ENCODE measurements at regions of chr11 and their contacts with region 1.

Region 1: DNA sequence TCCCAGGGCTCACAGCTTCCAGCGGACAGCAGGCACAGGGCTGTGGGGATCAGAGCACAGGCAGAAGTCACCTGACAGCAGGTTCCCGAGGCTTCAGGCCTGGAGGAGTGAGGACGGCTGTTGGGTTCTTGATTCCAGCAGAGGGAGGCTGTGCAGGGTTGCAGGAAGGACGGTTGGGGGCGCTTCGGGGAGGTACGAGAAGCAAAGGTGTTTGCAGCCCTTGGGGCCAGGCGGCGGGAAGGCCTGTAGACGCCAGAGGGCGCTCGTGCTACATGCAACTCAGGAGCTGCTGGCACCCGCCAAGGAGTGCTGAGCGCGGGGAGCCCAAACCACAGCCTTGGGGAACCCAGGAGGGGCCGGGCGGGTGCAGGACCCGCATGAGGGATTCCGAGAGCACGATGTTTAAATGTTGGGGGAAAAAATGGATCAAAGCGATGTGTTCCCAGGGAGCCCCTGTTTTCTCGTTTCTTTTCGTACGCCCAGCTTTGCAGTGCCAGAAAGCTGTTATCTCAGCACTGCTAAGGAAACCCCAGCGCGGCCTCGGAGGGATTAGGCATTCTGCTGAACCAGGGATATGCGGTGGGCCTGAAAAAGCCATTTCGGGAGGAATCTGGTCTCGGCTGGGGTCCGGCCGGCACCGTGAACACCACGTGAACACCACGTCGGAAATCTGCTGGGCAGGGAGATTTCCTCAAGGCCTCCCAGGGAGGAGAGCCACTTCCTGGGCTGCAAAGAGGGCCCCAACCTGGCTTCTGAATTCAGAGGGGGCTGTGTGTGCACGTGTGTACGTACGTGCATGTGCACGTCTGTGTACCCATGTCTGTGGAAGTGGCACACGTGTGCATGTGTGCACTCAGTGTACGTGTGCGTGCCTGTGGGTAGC is 88.1 kb downstream of the KCNQ1 start:
- DNase-seq: peak; percentile 88 to 95 (median 89)
- ATAC-seq: peak; percentile 93
- H3K4me3 ChIP-seq: no peak overlapping the region
- H3K27ac ChIP-seq: peak overlapping the region; percentile 15; the same call in 1 of the 3 replicates
- H3K4me1 ChIP-seq: peaks cover 9 to 62% of the 10 kb centered on the region in 2 experiments
- H3K27me3 ChIP-seq: peaks cover 0 to 39% of the 10 kb centered on the region in 2 experiments; a peak in 4 of 5 replicates
- CTCF ChIP-seq: peak; percentile 98 to 100 (median 99)
- EP300 ChIP-seq: no peak
- POLR2A ChIP-seq: no peak
- RAD21 ChIP-seq: peak; percentile 100

Region 2: DNA sequence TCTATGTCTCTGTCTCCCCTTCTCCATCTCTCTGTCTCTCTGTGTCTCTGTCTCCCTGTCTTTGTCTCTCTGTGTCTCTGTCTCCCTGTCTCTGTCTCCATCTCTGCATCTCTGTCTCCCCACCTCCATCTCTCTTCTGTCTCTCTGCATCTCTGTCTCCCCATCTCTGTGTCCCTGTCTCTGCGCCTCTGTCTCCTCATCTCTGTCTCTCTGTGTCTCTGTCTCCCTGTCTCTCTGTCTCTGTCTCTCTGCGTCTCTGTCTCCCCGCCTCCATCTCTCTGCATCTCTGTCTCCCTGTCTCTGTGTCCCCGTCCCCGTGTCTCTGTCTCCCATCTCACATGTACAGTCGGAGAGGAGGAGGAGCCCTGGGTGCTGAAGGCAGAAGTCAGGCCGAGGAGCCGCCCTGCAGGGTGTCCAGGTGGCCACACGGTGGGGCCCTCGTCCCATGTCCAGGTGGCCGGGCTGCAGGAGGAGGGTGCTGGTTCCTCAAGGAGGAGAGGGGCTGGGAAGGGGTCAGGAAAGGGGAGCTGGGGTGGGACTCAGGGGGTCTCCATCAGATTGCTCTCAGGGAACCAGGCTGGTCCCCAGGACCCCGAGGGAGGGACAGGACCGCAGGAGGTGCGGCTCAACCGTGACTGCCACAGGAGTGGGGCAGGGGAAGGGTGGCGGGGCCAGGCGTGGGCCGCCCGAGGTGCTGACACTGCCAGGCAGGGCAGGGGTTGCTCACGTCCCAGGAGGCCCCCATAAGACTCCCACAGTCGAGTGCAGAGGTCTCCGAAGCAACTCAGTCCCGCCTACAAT is 335.8 kb before region 1 on chr11:
- CTCF ChIA-PET with region 1: no interaction called
- POLR2A ChIA-PET with region 1: no interaction called
- in situ Hi-C with region 1: no loop called
- intact Hi-C with region 1: loop called (anchors 10 kb)
- DNase-seq: peak; percentile 82 to 86 (median 84)
- ATAC-seq: peak; percentile 93
- H3K4me3 ChIP-seq: no peak overlapping the region
- H3K27ac ChIP-seq: no peak overlapping the region
- H3K4me1 ChIP-seq: peaks cover 2 to 70% of the 10 kb centered on the region in 2 experiments; a peak in 3 of 5 replicates
- H3K27me3 ChIP-seq: peaks cover 0 to 32% of the 10 kb centered on the region in 2 experiments; a peak in 2 of 5 replicates
- CTCF ChIP-seq: peak; percentile 87 to 94 (median 93)
- EP300 ChIP-seq: no peak
- POLR2A ChIP-seq: no peak
- RAD21 ChIP-seq: peak; percentile 94 to 95

Region 3: DNA sequence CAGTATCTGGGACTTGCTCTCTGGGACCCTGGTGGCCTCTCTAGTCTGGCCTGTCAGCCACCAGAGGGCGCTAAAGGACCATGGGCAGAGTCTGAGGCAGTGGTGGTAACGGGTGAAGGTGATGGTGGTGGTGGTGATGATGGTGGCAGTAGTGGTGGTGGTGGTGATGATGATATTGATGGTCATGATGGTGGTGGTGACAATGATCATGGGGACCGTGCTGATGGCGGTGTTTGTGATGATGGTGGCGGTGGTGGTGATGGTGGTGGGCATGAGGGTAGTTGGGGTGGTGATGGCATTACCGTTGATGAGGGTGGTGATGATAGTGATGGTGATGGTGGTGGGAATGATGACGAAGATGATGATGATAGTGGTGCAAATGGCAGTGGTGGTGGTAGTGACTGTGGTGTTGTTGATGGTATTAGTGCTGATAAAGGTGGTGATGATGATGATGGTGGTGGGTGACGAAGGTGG is 104.6 kb before region 1 on chr11:
- CTCF ChIA-PET with region 1: interaction called, 76 read pairs
- POLR2A ChIA-PET with region 1: interaction called, 5 read pairs
- in situ Hi-C with region 1: loop called (anchors 5 kb)
- intact Hi-C with region 1: loop called (anchors 1 kb)
- DNase-seq: peak; percentile 67 to 76 (median 74)
- ATAC-seq: peak; percentile 96
- H3K4me3 ChIP-seq: no peak overlapping the region
- H3K27ac ChIP-seq: no peak overlapping the region
- H3K4me1 ChIP-seq: peaks cover 0 to 14% of the 10 kb centered on the region in 2 experiments; a peak in 2 of 5 replicates
- H3K27me3 ChIP-seq: peaks cover 0 to 43% of the 10 kb centered on the region in 2 experiments; a peak in 4 of 5 replicates
- CTCF ChIP-seq: peak; percentile 90 to 94 (median 91)
- EP300 ChIP-seq: no peak
- POLR2A ChIP-seq: no peak
- RAD21 ChIP-seq: peak; percentile 98 to 99

Region 4: DNA sequence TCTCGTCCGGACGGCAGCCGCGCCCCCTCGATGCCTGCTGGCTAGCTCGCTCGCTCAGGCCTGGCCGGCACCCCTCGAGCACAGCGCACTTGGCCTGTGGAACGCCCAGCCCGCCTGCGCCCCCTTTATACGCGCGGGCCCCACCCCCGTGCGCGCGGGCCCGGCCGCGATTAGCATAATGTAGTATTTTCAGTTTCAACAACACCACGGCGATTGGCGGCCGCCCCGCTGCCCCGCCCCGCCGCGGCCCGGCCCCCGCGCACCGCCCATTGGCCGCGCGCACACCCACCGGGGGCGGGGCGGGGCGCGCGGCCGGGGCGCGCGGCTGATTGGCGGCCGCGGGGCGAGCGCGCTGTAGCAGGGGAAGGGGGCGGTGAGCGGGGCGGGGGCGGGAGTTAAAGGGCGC is 352.7 kb after region 1 on chr11 and contains the start of gene CDKN1C:
- CTCF ChIA-PET with region 1: interaction called, 228 read pairs
- POLR2A ChIA-PET with region 1: interaction called, 13 read pairs
- in situ Hi-C with region 1: loop called (anchors 5 kb)
- intact Hi-C with region 1: loop called (anchors 1 kb)
- DNase-seq: peak; percentile 93 to 97 (median 94)
- ATAC-seq: peak; percentile 82
- H3K4me3 ChIP-seq: peak within 1 kb of the TSS; percentile 59
- H3K27ac ChIP-seq: peak within 1 kb of the TSS; percentile 49; the same call in 2 of the 3 replicates
- H3K4me1 ChIP-seq: peaks cover 21 to 81% of the 10 kb centered on the region in 2 experiments
- H3K27me3 ChIP-seq: 0 out of 5 replicates have a peak, but pooled peaks cover 0 to 5% of the 10 kb centered on the region in 2 experiments
- CTCF ChIP-seq: no peak
- EP300 ChIP-seq: no peak
- POLR2A ChIP-seq: peak; percentile 84
- RAD21 ChIP-seq: no peak
- polyA plus RNA-seq, gene CDKN1C: 9.3 to 18.7 TPM

Region 5: DNA sequence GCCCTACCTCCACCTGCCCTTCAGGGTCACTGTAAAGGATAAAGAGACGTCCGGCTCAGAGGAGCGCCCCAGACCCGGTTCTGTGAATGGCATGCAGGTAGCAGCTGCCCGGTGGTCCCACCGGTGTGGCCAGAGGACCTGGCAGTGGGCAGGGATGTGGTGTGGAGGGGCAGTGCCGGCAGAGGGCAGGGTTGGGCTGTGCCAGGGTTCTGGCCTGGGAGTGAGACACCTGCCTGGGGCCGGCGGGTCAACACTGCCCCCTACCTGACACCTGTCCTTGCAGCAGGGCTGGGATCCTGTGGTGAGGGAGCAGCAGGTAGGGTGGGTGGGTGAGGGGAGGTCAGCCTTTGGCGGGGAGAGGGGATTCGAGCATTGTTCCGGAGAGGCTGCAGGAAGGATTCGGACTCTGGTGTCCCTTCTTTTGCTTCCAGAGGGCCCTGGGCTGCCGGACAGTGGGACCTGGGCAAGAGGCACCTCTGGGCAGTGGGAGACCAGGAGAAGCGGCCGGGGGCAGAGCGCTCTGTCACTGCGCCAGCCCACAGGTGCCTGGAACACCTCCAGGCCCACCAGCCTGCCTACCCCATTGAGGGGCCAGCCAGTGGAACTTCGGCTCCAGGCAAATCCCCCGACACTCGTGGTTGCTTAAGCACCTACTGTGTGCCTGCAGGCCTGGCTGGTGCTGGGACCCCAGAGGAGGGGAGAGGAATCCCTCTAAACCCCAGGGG is 397.9 kb after region 1 on chr11:
- CTCF ChIA-PET with region 1: interaction called, 59 read pairs
- POLR2A ChIA-PET with region 1: interaction called, 11 read pairs
- in situ Hi-C with region 1: no loop called
- intact Hi-C with region 1: loop called (anchors 1 kb)
- DNase-seq: peak; percentile 70 to 77 (median 74)
- ATAC-seq: peak; percentile 71
- H3K4me3 ChIP-seq: peak overlapping the region; percentile 76
- H3K27ac ChIP-seq: peak overlapping the region; percentile 73
- H3K4me1 ChIP-seq: peaks cover 10 to 66% of the 10 kb centered on the region in 2 experiments; a peak in 4 of 5 replicates
- H3K27me3 ChIP-seq: no peaks in the 10 kb centered on the region
- CTCF ChIP-seq: peak; percentile 78 to 99 (median 90)
- EP300 ChIP-seq: no peak
- POLR2A ChIP-seq: no peak
- RAD21 ChIP-seq: peak; percentile 53 to 80

Measured in K562 (cell line).